HCT116 (cell line): ENCODE measurements at regions of chr3 and their contacts with region 1.

Region 1: GRCh38 chr3:59690886-59691285 is 641.1 kb upstream of the CFAP20DC start:
- DNase-seq: no peak
- ATAC-seq: no peak
- H3K4me3 ChIP-seq: no peak overlapping the region
- H3K27ac ChIP-seq: no peak overlapping the region
- H3K4me1 ChIP-seq: no peaks in the 10 kb centered on the region
- H3K27me3 ChIP-seq: peaks cover 13% of the 10 kb centered on the region
- CTCF ChIP-seq: no peak
- POLR2A ChIP-seq: no peak
- RAD21 ChIP-seq: no peak

Region 2: DNA sequence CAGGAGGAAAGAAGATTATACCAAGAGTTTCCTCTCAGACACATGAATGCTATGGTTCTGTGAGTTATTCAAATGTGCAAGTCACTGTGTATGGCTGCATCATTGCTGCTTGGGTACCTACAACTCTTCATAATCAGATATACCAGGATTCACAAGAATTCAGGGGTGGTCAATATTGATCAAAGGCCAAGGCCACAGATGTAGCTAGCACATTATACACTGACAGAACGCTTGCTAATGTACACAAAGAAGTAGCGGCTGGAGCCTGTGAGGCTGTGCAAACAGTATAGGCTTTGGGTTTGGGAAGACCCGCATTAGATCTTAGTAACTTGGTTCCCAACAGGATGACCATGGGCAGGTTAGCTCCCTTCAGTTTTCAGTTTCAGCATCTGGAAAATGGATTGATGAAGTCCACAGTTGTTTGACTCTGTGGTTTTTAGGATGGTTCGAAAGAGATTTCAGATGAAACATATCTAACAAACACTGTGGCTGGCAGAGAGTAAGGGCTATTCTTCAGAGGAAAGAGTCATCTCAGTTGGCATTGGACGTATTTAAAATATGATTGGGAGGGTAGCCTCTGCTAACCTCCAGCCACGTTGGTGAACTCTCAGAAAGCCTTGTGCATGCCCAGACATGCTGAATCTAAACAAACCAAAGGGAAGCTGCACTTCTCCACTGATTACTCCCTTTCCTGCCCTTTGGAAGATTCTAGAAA is 107.6 kb after region 1 on chr3:
- CTCF ChIA-PET with region 1: no interaction called
- POLR2A ChIA-PET with region 1: no interaction called
- RAD21 ChIA-PET with region 1: no interaction called
- intact Hi-C with region 1: loop called (anchors 1 kb)
- DNase-seq: no peak
- ATAC-seq: no peak
- H3K4me3 ChIP-seq: no peak overlapping the region
- H3K27ac ChIP-seq: no peak overlapping the region
- H3K4me1 ChIP-seq: no peaks in the 10 kb centered on the region
- H3K27me3 ChIP-seq: no peaks in the 10 kb centered on the region
- CTCF ChIP-seq: no peak
- POLR2A ChIP-seq: no peak
- RAD21 ChIP-seq: no peak